ENCODE measurements at regions of chr14 and their contacts with region 1.

Region 1: GRCh38 chr14:68824517-68825347 is 31.9 kb upstream of the ZFP36L1 start:
- DNase-seq: peak; percentile 90
- ATAC-seq: peak; percentile 92
- H3K4me3 ChIP-seq: no peak overlapping the region
- H3K27ac ChIP-seq: no peak overlapping the region
- H3K4me1 ChIP-seq: no peaks in the 10 kb centered on the region; the same call in 1 of the 2 replicates
- H3K27me3 ChIP-seq: no peaks in the 10 kb centered on the region
- CTCF ChIP-seq: peak; percentile 97

Region 2: DNA sequence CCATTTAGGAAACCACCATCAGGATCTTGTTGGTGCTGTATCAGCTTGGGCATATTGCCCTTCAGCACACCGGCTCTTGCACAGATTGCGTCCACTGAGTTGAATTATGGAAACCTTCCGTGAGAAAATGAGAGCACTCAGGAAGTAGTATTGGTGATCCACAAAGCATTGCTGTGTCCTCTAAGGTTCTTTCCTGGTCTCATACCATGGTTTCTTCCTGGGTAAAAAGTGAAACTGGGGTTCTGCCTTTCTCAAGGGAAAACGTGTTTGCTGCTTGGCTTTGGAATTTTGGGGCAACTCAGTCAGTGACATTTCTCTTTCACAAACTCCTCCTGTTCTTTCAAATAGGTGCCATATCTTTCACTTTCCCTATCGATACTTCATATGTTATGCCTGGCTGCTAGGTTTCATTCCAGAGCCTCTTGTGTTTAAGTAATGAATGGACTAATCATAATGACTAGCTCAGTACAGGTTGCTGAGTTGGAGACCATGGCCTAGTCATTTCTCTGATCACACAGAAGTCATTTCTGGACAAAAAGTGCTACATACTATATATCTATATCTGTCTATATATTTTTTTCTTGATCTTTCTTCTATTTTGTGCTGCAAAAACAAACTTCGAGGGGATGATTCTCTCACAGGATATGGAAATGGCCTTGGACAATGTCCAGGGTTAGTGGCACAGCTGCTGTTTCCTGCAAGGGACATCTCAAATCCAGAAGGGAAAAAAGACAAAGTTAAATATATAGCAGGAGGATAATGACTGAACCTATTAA is 455.3 kb before region 1 on chr14:
- CTCF ChIA-PET with region 1: no interaction called
- POLR2A ChIA-PET with region 1: no interaction called
- intact Hi-C with region 1: no loop called
- DNase-seq: no peak
- ATAC-seq: no peak
- H3K4me3 ChIP-seq: no peak overlapping the region
- H3K27ac ChIP-seq: no peak overlapping the region
- H3K4me1 ChIP-seq: peaks cover 16% of the 10 kb centered on the region
- H3K27me3 ChIP-seq: no peaks in the 10 kb centered on the region
- CTCF ChIP-seq: no peak

Region 3: GRCh38 chr14:68843471-68844209 is 18.9 kb after region 1 on chr14:
- CTCF ChIA-PET with region 1: interaction called, 8 read pairs
- POLR2A ChIA-PET with region 1: no interaction called
- intact Hi-C with region 1: loop called (anchors 1 kb)
- DNase-seq: peak; percentile 80
- ATAC-seq: peak; percentile 87
- H3K4me3 ChIP-seq: peak overlapping the region; percentile 48; the same call in 1 of the 2 replicates
- H3K27ac ChIP-seq: no peak overlapping the region
- H3K4me1 ChIP-seq: peaks cover 14% of the 10 kb centered on the region
- H3K27me3 ChIP-seq: no peaks in the 10 kb centered on the region
- CTCF ChIP-seq: peak; percentile 98

Measured in PC-3 (cell line).